Breast epithelium (tissue), 4 donors: ENCODE measurements at regions of chr14 and their contacts with region 1.

Region 1: GRCh38 chr14:66657780-66658179 is 149.8 kb downstream of the GPHN start:
- DNase-seq: no peak
- H3K4me3 ChIP-seq: no peak overlapping the region
- H3K27ac ChIP-seq: no peak overlapping the region
- H3K4me1 ChIP-seq: no peaks in the 10 kb centered on the region
- H3K27me3 ChIP-seq: no peaks in the 10 kb centered on the region
- CTCF ChIP-seq: no peak
- POLR2A ChIP-seq: no peak

Region 2: GRCh38 chr14:66974397-66975025 is 316.7 kb after region 1 on chr14:
- intact Hi-C with region 1: loop called (anchors 5 kb)
- DNase-seq: no peak
- H3K4me3 ChIP-seq: no peak overlapping the region
- H3K27ac ChIP-seq: no peak overlapping the region
- H3K4me1 ChIP-seq: no peaks in the 10 kb centered on the region
- H3K27me3 ChIP-seq: no peaks in the 10 kb centered on the region
- CTCF ChIP-seq: no peak
- POLR2A ChIP-seq: no peak

Region 3: DNA sequence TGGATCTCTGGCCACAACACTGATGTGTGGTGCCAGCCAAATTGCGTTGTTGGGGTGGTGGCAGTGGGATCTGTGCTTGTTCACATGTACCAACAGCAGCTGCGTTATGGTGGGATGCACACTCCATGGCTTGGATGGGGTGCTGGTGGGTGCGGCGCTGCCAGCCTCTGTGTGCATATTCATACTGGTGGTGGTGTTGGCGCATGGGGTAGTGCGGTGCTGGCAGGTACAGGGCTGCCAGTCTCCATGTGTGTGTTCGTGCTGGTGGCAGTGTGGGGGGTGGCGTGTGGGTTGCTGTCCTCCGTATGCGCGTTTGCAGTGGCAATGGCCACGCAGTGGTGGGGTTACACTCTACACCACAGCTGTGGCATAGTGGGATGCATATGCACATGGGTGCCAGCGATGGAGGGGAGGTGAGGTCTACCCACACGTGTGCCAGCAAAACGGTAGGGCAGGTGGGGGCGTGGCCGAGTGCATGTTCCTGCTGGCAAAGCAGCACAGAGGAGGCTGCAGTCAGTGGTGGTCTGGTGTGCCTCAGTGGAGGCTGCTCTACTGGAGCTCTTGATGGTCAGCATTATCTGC is 1188.3 kb after region 1 on chr14:
- intact Hi-C with region 1: no loop called
- DNase-seq: no peak
- H3K4me3 ChIP-seq: no peak overlapping the region
- H3K27ac ChIP-seq: no peak overlapping the region
- H3K4me1 ChIP-seq: no peaks in the 10 kb centered on the region
- H3K27me3 ChIP-seq: no peaks in the 10 kb centered on the region
- CTCF ChIP-seq: no peak
- POLR2A ChIP-seq: no peak